Ovary (tissue), 10 donors: ENCODE measurements at regions of chr6 and their contacts with region 1.

Region 1: GRCh38 chr6:127365874-127366273 is 22.5 kb upstream of the ECHDC1 start:
- DNase-seq: no peak
- H3K4me3 ChIP-seq: no peak overlapping the region
- H3K27ac ChIP-seq: no peak overlapping the region
- H3K4me1 ChIP-seq: no peaks in the 10 kb centered on the region
- H3K27me3 ChIP-seq: no peaks in the 10 kb centered on the region
- CTCF ChIP-seq: no peak
- EP300 ChIP-seq: no peak
- POLR2A ChIP-seq: no peak

Region 2: DNA sequence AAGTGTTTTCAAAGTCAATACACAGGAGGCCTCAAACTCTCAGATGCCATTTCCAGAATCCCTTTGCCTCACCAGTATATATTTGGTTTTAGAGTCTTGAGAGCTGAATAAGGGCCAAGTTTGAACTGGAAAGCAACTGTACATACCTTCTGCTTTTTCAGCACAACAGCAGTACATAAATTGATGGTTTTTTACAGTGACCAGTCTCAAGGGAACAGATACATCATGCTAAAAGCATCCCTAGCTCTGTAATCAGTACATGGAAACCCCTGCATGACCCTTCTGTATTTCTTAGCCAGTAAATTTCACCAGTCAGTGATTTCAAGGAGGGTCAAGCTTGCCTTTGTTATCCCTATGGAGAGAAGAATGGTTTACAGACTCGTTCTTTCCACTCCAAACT is 18.1 kb after region 1 on chr6:
- intact Hi-C with region 1: loop called in 1 of 4 experiments (anchors 2 kb)
- DNase-seq: no peak
- H3K4me3 ChIP-seq: no peak overlapping the region
- H3K27ac ChIP-seq: no peak overlapping the region
- H3K4me1 ChIP-seq: peaks cover 2% of the 10 kb centered on the region
- H3K27me3 ChIP-seq: no peaks in the 10 kb centered on the region
- CTCF ChIP-seq: no peak
- EP300 ChIP-seq: no peak
- POLR2A ChIP-seq: no peak

Region 3: GRCh38 chr6:129340983-129341382 is 1975.1 kb after region 1 on chr6:
- intact Hi-C with region 1: no loop called
- DNase-seq: no peak
- H3K4me3 ChIP-seq: no peak overlapping the region
- H3K27ac ChIP-seq: no peak overlapping the region
- H3K4me1 ChIP-seq: no peaks in the 10 kb centered on the region
- H3K27me3 ChIP-seq: no peaks in the 10 kb centered on the region
- CTCF ChIP-seq: no peak
- EP300 ChIP-seq: no peak
- POLR2A ChIP-seq: no peak